Activated naive CD4-positive, alpha-beta T cell treated with anti-CD3 and anti-CD28 coated beads for 36 hours (primary cell): ENCODE measurements at regions of chr1 and their contacts with region 1.

Region 1: GRCh38 chr1:169601093-169601881 is 15.0 kb upstream of the F5 start:
- DNase-seq: peak; percentile 34
- H3K4me3 Mint-ChIP-seq: no peak overlapping the region
- H3K27ac Mint-ChIP-seq: peak overlapping the region; percentile 84
- H3K4me1 Mint-ChIP-seq: peaks cover 61% of the 10 kb centered on the region
- H3K27me3 Mint-ChIP-seq: no peaks in the 10 kb centered on the region

Region 2: DNA sequence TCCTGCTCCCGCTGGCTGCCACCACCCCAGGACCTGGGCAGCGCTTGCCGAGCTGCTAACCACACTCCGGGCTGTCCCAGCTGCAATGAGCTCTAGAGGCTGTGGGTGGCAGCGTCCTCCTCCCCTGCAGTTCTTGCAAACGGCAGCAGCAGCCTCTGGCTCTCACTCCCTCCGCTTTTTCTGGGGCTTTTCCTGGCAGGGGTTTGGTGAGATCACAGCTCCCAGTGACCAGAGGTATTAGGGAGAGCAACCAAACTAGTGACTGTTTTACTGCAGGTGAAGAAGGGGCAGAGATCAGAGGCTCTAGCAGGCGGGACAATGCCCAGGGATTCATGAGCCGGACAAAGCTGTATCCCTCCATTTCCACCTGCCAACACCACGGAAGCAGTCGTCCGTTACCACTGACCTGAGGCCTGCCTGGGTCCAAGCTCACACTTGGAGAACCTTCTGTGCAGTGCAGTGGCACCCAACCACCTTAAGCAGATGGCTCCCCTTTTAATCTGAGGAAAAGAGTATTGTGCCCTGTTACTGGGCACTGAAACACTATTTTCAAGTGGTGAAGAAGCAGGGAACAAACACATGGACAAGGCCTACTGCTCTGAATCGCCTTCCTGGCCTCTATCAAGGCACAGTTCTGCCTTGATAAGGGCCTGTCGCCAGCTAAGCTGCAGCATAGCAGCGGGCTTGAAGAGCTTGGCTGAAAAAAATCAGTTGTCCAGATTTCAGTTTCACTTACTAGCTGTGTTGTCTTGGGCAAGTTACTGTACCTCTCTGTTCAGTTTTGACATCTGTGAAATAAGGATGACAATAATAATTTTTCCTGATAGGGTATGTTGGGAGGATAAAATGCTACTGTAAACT is 14.7 kb before region 1 on chr1 and contains the start of gene F5:
- CTCF ChIA-PET with region 1: interaction called, 71 read pairs
- intact Hi-C with region 1: loop called (anchors 1 kb)
- DNase-seq: peak; percentile 94
- H3K4me3 Mint-ChIP-seq: peak within 1 kb of the TSS; percentile 94
- H3K27ac Mint-ChIP-seq: peak within 1 kb of the TSS; percentile 97
- H3K4me1 Mint-ChIP-seq: peaks cover 60% of the 10 kb centered on the region
- H3K27me3 Mint-ChIP-seq: no peaks in the 10 kb centered on the region
- total RNA-seq, gene F5: 58.6 to 59.1 TPM

Region 3: DNA sequence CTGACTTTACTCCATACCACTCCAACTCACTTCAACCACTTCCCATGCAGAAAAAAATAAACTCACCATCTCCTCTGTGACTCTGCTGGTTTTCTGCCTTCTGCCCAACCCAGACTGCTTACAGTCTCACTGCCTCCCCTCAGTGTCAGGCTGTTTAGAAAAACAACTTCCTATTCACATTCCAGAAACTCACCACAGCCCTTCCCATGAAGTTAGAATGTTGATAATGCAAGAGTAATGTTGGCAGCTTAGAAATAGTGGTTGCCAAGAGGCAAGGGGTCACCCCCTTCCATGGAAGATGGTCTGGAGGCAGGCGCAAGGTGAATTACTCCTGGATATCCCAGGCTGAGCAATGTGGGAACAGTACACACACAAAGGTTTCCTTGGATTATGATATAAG is 28.7 kb after region 1 on chr1 and contains the start of gene SELP:
- CTCF ChIA-PET with region 1: interaction called, 25 read pairs
- intact Hi-C with region 1: no loop called
- DNase-seq: no peak
- H3K4me3 Mint-ChIP-seq: no peak within 1 kb of the TSS
- H3K27ac Mint-ChIP-seq: peak within 1 kb of the TSS; percentile 47
- H3K4me1 Mint-ChIP-seq: peaks cover 65% of the 10 kb centered on the region
- H3K27me3 Mint-ChIP-seq: no peaks in the 10 kb centered on the region
- total RNA-seq, gene SELP: 2.4 to 2.6 TPM

Region 4: DNA sequence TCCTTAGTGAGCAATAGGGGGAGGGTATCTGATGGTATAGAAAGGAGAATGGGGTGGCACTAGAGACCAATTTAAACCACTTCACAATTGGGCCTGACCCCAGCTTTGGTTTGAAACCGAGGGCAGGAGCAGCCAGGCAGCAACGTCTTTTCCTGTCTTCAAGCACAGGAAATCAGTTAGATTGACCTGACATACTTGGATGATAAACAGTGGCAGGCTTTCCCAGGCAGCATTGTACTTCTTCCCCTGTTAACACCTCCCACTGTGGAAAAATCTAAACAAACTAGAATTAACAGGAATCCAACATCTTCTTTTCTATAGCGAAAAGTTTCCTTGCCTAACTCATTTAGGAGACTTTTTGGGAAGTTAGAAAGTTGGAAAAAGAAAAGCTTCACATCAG is 69.5 kb after region 1 on chr1:
- CTCF ChIA-PET with region 1: interaction called, 94 read pairs
- intact Hi-C with region 1: no loop called
- DNase-seq: no peak
- H3K4me3 Mint-ChIP-seq: no peak overlapping the region
- H3K27ac Mint-ChIP-seq: peak overlapping the region; percentile 62
- H3K4me1 Mint-ChIP-seq: peaks cover 60% of the 10 kb centered on the region
- H3K27me3 Mint-ChIP-seq: no peaks in the 10 kb centered on the region

Region 5: GRCh38 chr1:169689395-169689794 is 88.1 kb after region 1 on chr1:
- CTCF ChIA-PET with region 1: interaction called, 133 read pairs
- intact Hi-C with region 1: loop called (anchors 1 kb)
- DNase-seq: no peak
- H3K4me3 Mint-ChIP-seq: peak overlapping the region; percentile 36
- H3K27ac Mint-ChIP-seq: no peak overlapping the region
- H3K4me1 Mint-ChIP-seq: peaks cover 60% of the 10 kb centered on the region
- H3K27me3 Mint-ChIP-seq: no peaks in the 10 kb centered on the region

Region 6: GRCh38 chr1:169794530-169795416 is 193.5 kb after region 1 on chr1 and contains the start of gene METTL18:
- CTCF ChIA-PET with region 1: interaction called, 12 read pairs
- intact Hi-C with region 1: loop called (anchors 1 kb)
- DNase-seq: peak; percentile 97
- H3K4me3 Mint-ChIP-seq: peak within 1 kb of the TSS; percentile 99
- H3K27ac Mint-ChIP-seq: peak within 1 kb of the TSS; percentile 99
- H3K4me1 Mint-ChIP-seq: peaks cover 48% of the 10 kb centered on the region
- H3K27me3 Mint-ChIP-seq: no peaks in the 10 kb centered on the region
- total RNA-seq, gene METTL18: 10.6 to 11.1 TPM

Region 7: GRCh38 chr1:169816622-169817021 is 215.3 kb after region 1 on chr1:
- CTCF ChIA-PET with region 1: no interaction called
- intact Hi-C with region 1: no loop called
- DNase-seq: no peak
- H3K4me3 Mint-ChIP-seq: no peak overlapping the region
- H3K27ac Mint-ChIP-seq: no peak overlapping the region
- H3K4me1 Mint-ChIP-seq: no peaks in the 10 kb centered on the region
- H3K27me3 Mint-ChIP-seq: no peaks in the 10 kb centered on the region

Region 8: DNA sequence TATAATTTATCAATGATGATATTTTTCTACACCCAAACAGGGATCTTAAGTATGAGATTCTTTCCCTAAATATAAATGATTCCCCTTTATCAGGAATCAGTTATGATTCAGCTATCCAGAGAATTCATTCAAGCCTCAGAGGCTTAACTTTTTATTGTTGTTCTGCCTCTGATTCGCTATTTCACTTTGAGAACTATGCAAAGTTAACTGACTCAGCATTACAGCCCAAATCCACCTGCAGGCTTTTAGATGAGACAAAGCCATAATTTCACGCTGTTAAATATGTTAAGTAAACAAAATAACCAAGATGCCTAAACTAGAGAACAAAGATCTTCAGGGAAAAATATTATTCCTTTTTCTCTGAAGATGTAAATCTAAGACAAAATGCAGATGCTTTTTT is 283.9 kb after region 1 on chr1:
- CTCF ChIA-PET with region 1: no interaction called
- intact Hi-C with region 1: no loop called
- DNase-seq: no peak
- H3K4me3 Mint-ChIP-seq: no peak overlapping the region
- H3K27ac Mint-ChIP-seq: no peak overlapping the region
- H3K4me1 Mint-ChIP-seq: peaks cover 30% of the 10 kb centered on the region
- H3K27me3 Mint-ChIP-seq: no peaks in the 10 kb centered on the region